CD4-positive, alpha-beta T cell (primary cell): ENCODE measurements at regions of chr3 and their contacts with region 1.

Region 1: GRCh38 chr3:49786241-49786958 is at the start of gene IP6K1:
- DNase-seq: peak; percentile 97 to 100 (median 99)
- ATAC-seq: peak; percentile 99
- H3K4me3 ChIP-seq: peak within 1 kb of the TSS; percentile 97
- H3K4me3 Mint-ChIP-seq: peak within 1 kb of the TSS; percentile 94
- H3K27ac ChIP-seq: peak within 1 kb of the TSS; percentile 88 to 94
- H3K27ac Mint-ChIP-seq: peak within 1 kb of the TSS; percentile 100
- H3K4me1 ChIP-seq: peaks cover 58% of the 10 kb centered on the region
- H3K4me1 Mint-ChIP-seq: peaks cover 36% of the 10 kb centered on the region
- H3K27me3 ChIP-seq: no peaks in the 10 kb centered on the region
- H3K27me3 Mint-ChIP-seq: no peaks in the 10 kb centered on the region
- CTCF ChIP-seq: no peak
- total RNA-seq, gene IP6K1: 33.3 to 36.0 TPM

Region 2: GRCh38 chr3:49723628-49724551 is 62.5 kb before region 1 on chr3 and contains the start of gene GMPPB:
- CTCF ChIA-PET with region 1: no interaction called
- POLR2A ChIA-PET with region 1: interaction called, 18 read pairs
- intact Hi-C with region 1: loop called (anchors 2 kb)
- DNase-seq: peak; percentile 81 to 96 (median 88)
- ATAC-seq: peak; percentile 70
- H3K4me3 ChIP-seq: peak within 1 kb of the TSS; percentile 99
- H3K4me3 Mint-ChIP-seq: peak within 1 kb of the TSS; percentile 98
- H3K27ac ChIP-seq: peak within 1 kb of the TSS; percentile 96 to 97
- H3K27ac Mint-ChIP-seq: peak within 1 kb of the TSS; percentile 93
- H3K4me1 ChIP-seq: peaks cover 37% of the 10 kb centered on the region
- H3K4me1 Mint-ChIP-seq: peaks cover 44% of the 10 kb centered on the region
- H3K27me3 ChIP-seq: no peaks in the 10 kb centered on the region
- H3K27me3 Mint-ChIP-seq: no peaks in the 10 kb centered on the region
- CTCF ChIP-seq: no peak
- total RNA-seq, gene GMPPB: 39.0 to 41.4 TPM

Region 3: DNA sequence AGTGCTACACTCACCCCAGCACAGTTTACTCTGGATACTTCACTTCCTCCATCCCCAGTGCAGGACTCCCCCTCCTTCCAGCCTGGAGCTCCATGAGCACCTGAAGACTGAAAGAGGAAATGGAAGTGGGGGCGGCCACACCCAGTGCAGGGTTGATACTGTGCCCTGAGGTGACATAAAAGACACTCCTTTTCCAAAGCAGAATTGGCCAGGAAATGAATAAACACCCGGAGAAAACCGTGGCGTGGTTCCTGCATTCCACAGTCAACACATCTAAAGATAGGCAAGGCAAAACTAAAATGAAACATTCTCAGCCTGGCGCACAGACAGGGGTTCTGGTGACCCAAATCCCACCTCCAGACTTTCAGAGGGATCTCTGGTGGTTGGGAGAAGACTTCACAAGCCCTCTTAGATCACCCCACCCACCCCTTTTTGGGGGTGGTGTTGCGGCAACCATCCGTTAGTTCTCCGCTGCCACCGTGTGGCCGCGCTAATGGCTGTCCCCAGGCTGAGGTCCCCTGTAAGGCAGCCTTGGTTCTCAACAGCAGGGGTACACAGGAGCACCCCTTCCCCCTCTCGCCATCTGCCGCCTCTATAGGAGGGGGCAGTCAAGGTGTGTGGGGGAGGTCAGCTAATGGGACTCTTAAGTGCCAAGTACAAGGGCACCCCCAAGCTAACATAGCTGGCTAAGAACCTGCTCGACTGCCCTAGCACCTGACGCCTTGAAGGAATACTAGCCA is 119.8 kb after region 1 on chr3:
- CTCF ChIA-PET with region 1: no interaction called
- POLR2A ChIA-PET with region 1: interaction called, 3 read pairs
- intact Hi-C with region 1: loop called in 1 of 2 experiments (anchors 5 kb)
- DNase-seq: peak; percentile 15 to 77 (median 40)
- ATAC-seq: peak; percentile 43
- H3K4me3 ChIP-seq: no peak overlapping the region
- H3K4me3 Mint-ChIP-seq: peak overlapping the region; percentile 75
- H3K27ac ChIP-seq: peak overlapping the region in 1 of 2 donors; percentile 32
- H3K27ac Mint-ChIP-seq: peak overlapping the region; percentile 85
- H3K4me1 ChIP-seq: peaks cover 39% of the 10 kb centered on the region
- H3K4me1 Mint-ChIP-seq: peaks cover 33% of the 10 kb centered on the region
- H3K27me3 ChIP-seq: no peaks in the 10 kb centered on the region
- H3K27me3 Mint-ChIP-seq: no peaks in the 10 kb centered on the region
- CTCF ChIP-seq: peak; percentile 57

Region 4: GRCh38 chr3:50088725-50089608 is 302.6 kb after region 1 on chr3 and contains the start of gene RBM5:
- CTCF ChIA-PET with region 1: no interaction called
- POLR2A ChIA-PET with region 1: interaction called, 3 read pairs
- intact Hi-C with region 1: loop called in 1 of 2 experiments (anchors 5 kb)
- DNase-seq: peak; percentile 83 to 95 (median 89)
- ATAC-seq: peak; percentile 99
- H3K4me3 ChIP-seq: peak within 1 kb of the TSS; percentile 73
- H3K4me3 Mint-ChIP-seq: peak within 1 kb of the TSS; percentile 97
- H3K27ac ChIP-seq: peak within 1 kb of the TSS; percentile 88 to 92
- H3K27ac Mint-ChIP-seq: peak within 1 kb of the TSS; percentile 99
- H3K4me1 ChIP-seq: peaks cover 25% of the 10 kb centered on the region
- H3K4me1 Mint-ChIP-seq: peaks cover 37% of the 10 kb centered on the region
- H3K27me3 ChIP-seq: no peaks in the 10 kb centered on the region
- H3K27me3 Mint-ChIP-seq: no peaks in the 10 kb centered on the region
- CTCF ChIP-seq: no peak
- total RNA-seq, gene RBM5: 324 to 330 TPM